ENCODE measurements at regions of chr22 and their contacts with region 1.

Region 1: GRCh38 chr22:38681784-38682335 is at the start of gene TOMM22:
- DNase-seq: peak; percentile 79 to 91
- H3K4me3 ChIP-seq: peak within 1 kb of the TSS; percentile 88
- H3K27ac ChIP-seq: peak within 1 kb of the TSS; percentile 40
- H3K4me1 ChIP-seq: peaks cover 4% of the 10 kb centered on the region; the same call in 1 of the 2 replicates
- H3K27me3 ChIP-seq: no peaks in the 10 kb centered on the region
- CTCF ChIP-seq: peak; percentile 61; the same call in 1 of the 2 replicates
- total RNA-seq, gene TOMM22: 106 and 120 TPM in 2 replicates

Region 2: GRCh38 chr22:38479096-38479837 is 202.6 kb before region 1 on chr22:
- CTCF ChIA-PET with region 1: no interaction called
- POLR2A ChIA-PET with region 1: interaction called, 10 read pairs
- intact Hi-C with region 1: no loop called
- DNase-seq: no peak
- H3K4me3 ChIP-seq: no peak overlapping the region
- H3K27ac ChIP-seq: no peak overlapping the region
- H3K4me1 ChIP-seq: no peaks in the 10 kb centered on the region
- H3K27me3 ChIP-seq: no peaks in the 10 kb centered on the region
- CTCF ChIP-seq: no peak

Region 3: DNA sequence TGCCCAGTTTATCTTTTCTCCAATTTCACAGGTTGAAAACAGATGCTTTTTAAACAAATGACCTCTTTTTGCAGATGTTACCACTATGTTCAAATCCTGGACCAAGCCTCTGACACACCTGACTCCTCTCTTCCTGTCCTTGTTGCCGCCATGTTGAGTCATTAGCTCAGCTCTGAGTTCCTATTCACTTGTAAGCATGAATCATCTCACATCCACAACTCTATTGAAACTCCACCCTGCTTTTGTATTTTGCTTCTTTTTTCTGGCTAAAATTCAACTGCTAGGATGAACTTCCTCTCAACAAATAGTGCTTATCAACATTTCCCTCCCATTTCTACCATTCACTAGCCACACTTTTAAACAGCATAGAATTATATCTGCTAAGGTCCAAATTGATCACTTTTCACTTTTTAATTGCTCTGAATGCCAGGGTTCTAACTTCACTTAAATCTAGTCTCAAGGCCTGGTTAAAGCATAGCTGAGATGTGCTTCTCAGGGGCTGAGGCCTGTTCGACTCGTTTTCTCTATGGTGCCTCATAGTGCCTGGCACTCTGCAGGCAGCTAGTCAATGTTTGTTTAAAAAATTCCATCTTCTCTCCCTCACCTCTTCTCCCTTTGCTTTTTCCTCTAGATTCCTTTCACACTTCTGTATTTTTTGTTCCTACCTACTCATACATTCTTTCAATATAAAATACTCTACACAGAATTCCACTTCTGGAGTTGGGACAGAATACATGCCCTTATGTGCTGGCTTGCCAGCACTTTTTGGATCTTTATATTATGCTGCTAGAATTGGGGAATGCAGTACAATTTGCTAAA is 15.0 kb after region 1 on chr22:
- CTCF ChIA-PET with region 1: interaction called, 16 read pairs
- POLR2A ChIA-PET with region 1: interaction called, 8 read pairs
- intact Hi-C with region 1: no loop called
- DNase-seq: peak; percentile 64 to 89
- H3K4me3 ChIP-seq: peak overlapping the region; percentile 82
- H3K27ac ChIP-seq: peak overlapping the region; percentile 88
- H3K4me1 ChIP-seq: peaks cover 56% of the 10 kb centered on the region
- H3K27me3 ChIP-seq: no peaks in the 10 kb centered on the region
- CTCF ChIP-seq: no peak

Measured in PC-9 (cell line).